ENCODE measurements at regions of chr5 and their contacts with region 1.

Region 1: DNA sequence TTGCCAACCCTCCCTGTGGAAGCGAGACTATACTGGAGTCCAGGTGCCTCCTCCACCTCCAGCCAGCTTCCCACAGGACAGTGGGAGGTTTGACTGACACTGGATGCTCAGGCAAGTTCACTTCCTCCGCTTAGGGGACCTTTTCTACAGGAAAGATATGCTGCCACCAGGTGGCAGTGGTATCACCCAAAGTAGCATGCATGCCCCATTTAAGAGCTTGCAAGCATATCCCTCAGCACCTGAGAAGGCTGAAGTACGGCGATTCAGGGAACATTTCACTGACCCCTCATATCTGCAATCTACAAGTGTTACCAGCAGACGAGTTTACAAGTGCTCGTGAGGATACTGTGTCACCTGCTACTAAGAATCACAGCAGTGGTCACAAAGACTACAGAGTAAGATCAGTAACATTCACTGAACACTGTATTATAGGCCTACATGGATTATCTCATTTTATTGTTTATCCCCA is 75.5 kb downstream of the KLHL3 start:
- DNase-seq: peak; percentile 65 to 84
- ATAC-seq: peak; percentile 99
- H3K4me3 ChIP-seq: no peak overlapping the region
- H3K27ac ChIP-seq: no peak overlapping the region
- H3K4me1 ChIP-seq: no peaks in the 10 kb centered on the region
- CTCF ChIP-seq: peak; percentile 86
- EP300 ChIP-seq: no peak
- POLR2A ChIP-seq: no peak
- RAD21 ChIP-seq: peak; percentile 69 to 74

Region 2: DNA sequence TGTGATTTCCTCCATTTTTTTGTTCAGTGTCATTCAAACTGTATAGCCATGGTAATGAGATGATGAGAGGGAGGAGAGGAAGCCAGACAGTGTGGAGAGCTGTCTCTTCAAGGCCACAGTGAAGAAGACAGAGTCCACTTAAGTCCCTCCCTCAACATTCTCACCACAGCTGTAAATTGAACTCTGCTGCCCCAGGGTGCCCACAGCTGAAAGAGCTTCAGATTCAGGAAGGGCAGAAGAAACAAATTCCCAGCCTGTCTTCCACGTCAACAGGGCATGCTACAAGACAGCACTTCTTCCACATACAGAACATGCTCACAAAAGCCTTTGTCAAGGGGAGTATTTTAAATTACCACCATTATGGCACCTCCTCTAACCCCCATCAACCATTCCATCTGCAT is 24.9 kb before region 1 on chr5:
- CTCF ChIA-PET with region 1: interaction called, 25 read pairs
- POLR2A ChIA-PET with region 1: no interaction called
- DNase-seq: no peak
- ATAC-seq: no peak; a peak in 1 of 6 replicates
- H3K4me3 ChIP-seq: no peak overlapping the region
- H3K27ac ChIP-seq: no peak overlapping the region
- H3K4me1 ChIP-seq: no peaks in the 10 kb centered on the region
- CTCF ChIP-seq: no peak
- EP300 ChIP-seq: no peak
- POLR2A ChIP-seq: no peak
- RAD21 ChIP-seq: no peak

Region 3: GRCh38 chr5:137649228-137649935 is 11.0 kb before region 1 on chr5:
- CTCF ChIA-PET with region 1: interaction called, 21 read pairs
- POLR2A ChIA-PET with region 1: no interaction called
- DNase-seq: no peak
- ATAC-seq: no peak
- H3K4me3 ChIP-seq: no peak overlapping the region
- H3K27ac ChIP-seq: no peak overlapping the region
- H3K4me1 ChIP-seq: no peaks in the 10 kb centered on the region
- CTCF ChIP-seq: no peak
- EP300 ChIP-seq: no peak
- POLR2A ChIP-seq: no peak
- RAD21 ChIP-seq: no peak

Region 4: DNA sequence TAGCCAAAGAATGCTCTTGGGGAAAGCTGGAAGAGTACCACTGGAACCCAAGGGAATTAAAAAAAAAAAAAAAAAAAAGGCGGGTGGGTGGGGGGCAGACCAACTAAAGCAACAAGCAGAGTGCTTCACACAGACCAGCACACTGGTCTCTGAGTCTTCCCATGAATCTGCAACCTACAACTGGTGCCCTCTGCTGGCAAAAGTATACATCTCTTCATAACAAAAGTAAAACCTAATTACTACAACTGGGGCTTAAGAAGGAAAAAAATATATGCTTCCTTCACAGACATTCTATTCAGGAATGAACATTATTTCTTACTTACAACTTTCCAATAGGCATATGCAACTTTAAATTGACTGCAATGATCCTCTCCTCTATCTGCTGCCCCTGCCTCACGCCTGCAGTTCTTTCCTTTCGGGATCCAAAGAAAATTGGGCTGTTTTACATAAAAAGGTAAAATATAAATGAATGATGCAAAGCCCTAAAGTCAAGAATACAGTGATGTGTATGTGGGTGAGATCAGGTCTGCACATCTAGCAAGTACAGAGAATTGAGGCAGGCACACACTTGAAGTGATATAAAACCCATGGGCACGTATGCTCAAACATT is 82.8 kb after region 1 on chr5:
- CTCF ChIA-PET with region 1: interaction called, 84 read pairs
- POLR2A ChIA-PET with region 1: interaction called, 3 read pairs
- DNase-seq: peak; percentile 48 to 77
- ATAC-seq: peak; percentile 89 to 91
- H3K4me3 ChIP-seq: no peak overlapping the region
- H3K27ac ChIP-seq: no peak overlapping the region
- H3K4me1 ChIP-seq: no peaks in the 10 kb centered on the region
- CTCF ChIP-seq: peak; percentile 77
- EP300 ChIP-seq: no peak
- POLR2A ChIP-seq: no peak
- RAD21 ChIP-seq: peak; percentile 67 to 69

Region 5: DNA sequence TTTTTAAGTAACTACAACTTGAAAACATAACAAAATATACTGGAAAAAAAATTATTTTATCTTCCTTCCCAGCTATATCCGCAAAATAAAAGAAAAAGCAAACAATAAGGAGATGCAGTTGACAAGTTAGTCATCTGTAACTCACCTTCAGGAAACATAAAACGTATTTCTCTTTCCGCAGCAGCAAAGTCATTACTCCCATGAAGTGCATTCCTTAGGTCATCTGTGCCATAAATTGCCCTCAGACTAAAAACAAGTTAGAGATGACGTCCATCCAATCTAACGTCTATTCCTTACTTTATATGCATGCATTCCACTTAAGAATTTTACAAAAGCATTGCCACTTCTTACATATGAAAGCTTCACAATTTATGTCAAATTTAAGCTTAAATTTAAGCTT is 468.0 kb after region 1 on chr5:
- CTCF ChIA-PET with region 1: interaction called, 13 read pairs
- POLR2A ChIA-PET with region 1: no interaction called
- DNase-seq: no peak
- ATAC-seq: no peak
- H3K4me3 ChIP-seq: no peak overlapping the region
- H3K27ac ChIP-seq: no peak overlapping the region
- H3K4me1 ChIP-seq: 0 out of 3 replicates have a peak, but pooled peaks cover 4% of the 10 kb centered on the region
- CTCF ChIP-seq: no peak
- EP300 ChIP-seq: no peak
- POLR2A ChIP-seq: no peak
- RAD21 ChIP-seq: no peak

Measured in A549 (cell line).